ENCODE measurements at regions of chr7 and their contacts with region 1.

Region 1: GRCh38 chr7:19713676-19714075 is 4.8 kb upstream of the POLR1F start:
- DNase-seq: peak; percentile 6
- H3K4me3 ChIP-seq: no peak overlapping the region
- H3K27ac ChIP-seq: no peak overlapping the region
- H3K27me3 ChIP-seq: no peaks in the 10 kb centered on the region
- CTCF ChIP-seq: peak; percentile 66

Region 2: DNA sequence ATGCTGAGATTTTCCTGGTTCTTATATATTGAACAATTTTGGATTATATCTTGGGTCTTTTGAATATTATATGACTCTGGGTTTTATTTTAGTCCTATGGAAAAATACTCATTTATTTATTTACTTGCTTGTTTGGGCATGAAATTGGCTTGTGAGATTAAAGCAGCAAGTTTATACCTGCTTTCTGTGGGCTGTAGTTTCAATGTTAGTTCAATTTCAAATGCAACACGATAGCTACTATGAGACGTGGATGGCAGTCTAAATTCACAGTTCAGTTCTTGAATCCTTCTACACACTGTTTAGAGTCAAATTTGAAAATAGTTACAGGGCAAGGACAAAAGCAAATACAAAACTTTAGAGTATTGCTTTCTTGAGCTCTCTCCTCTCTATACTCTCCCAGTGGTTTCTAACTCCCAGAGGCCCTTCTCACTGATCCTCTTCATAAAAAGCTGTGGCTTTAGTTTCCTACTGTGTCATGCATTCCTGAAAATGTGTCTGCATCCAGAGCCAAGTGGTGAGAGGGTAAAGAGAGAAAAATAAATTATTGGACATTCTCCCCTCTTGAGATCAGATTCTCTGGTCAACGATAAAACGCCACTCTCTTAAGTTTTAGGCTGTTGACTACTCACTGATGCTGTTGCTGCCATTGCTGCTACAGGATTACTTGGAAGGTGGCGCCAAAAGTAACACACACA is 39.3 kb before region 1 on chr7:
- CTCF ChIA-PET with region 1: no interaction called
- POLR2A ChIA-PET with region 1: no interaction called
- DNase-seq: no peak
- H3K4me3 ChIP-seq: no peak overlapping the region
- H3K27ac ChIP-seq: no peak overlapping the region
- H3K27me3 ChIP-seq: no peaks in the 10 kb centered on the region
- CTCF ChIP-seq: no peak

Region 3: GRCh38 chr7:19698331-19698730 is 15.3 kb before region 1 on chr7:
- CTCF ChIA-PET with region 1: interaction called, 35 read pairs
- POLR2A ChIA-PET with region 1: interaction called, 3 read pairs
- DNase-seq: no peak
- H3K4me3 ChIP-seq: no peak overlapping the region
- H3K27ac ChIP-seq: no peak overlapping the region
- H3K27me3 ChIP-seq: no peaks in the 10 kb centered on the region
- CTCF ChIP-seq: no peak

Region 4: DNA sequence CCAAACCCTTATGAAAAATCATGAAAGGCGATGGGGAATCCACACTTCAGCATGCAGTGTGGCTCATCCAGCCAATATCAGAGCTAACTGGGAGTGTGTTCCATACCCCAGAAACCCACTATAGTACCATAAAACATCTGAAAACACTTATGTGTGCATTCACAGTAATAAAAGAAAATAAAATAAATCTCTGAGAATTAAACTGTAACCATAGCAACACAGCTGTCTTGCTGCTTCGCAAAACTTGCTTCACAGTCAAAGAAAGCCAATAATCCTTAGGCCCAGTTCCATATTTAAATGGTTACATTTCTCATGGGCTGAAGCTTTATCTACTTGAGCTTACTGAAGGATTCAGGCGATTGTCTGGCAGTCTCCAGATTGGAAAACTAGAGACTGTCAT is 15.0 kb after region 1 on chr7:
- CTCF ChIA-PET with region 1: interaction called, 26 read pairs
- POLR2A ChIA-PET with region 1: no interaction called
- DNase-seq: no peak
- H3K4me3 ChIP-seq: no peak overlapping the region
- H3K27ac ChIP-seq: no peak overlapping the region
- H3K27me3 ChIP-seq: no peaks in the 10 kb centered on the region
- CTCF ChIP-seq: no peak

Region 5: DNA sequence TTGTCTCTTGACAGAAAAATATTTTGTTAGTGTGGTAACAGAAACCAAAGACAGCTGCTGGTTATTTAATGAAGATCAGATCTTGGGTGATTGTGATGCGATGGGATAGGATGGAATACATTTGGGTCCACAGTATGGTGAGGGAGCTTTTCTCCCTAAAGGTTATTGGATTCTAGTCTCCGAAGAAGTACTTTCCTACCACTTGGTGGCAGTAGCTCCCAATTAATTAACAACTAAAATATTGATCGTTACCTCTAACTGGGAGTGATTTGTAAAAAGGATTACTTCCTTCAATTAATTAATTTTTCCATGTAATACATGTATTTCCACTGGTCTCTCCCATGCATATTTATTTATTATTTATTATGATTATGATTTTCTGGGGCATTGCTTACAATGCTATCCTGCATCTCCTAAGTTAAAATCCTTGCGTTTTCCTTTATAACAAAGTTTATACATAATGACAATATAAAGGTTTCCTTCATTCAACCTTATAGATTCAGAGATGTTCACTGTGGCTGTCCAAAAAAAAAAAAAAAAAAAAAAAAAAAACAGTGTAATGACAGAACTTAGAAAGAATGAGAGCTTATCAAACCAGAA is 34.2 kb after region 1 on chr7:
- CTCF ChIA-PET with region 1: interaction called, 26 read pairs
- POLR2A ChIA-PET with region 1: no interaction called
- DNase-seq: no peak
- H3K4me3 ChIP-seq: no peak overlapping the region
- H3K27ac ChIP-seq: no peak overlapping the region
- H3K27me3 ChIP-seq: no peaks in the 10 kb centered on the region
- CTCF ChIP-seq: peak; percentile 62

Region 6: GRCh38 chr7:19754521-19755116 is 40.9 kb after region 1 on chr7:
- CTCF ChIA-PET with region 1: interaction called, 13 read pairs
- POLR2A ChIA-PET with region 1: no interaction called
- DNase-seq: no peak
- H3K4me3 ChIP-seq: no peak overlapping the region
- H3K27ac ChIP-seq: no peak overlapping the region
- H3K27me3 ChIP-seq: no peaks in the 10 kb centered on the region
- CTCF ChIP-seq: peak; percentile 74

Region 7: DNA sequence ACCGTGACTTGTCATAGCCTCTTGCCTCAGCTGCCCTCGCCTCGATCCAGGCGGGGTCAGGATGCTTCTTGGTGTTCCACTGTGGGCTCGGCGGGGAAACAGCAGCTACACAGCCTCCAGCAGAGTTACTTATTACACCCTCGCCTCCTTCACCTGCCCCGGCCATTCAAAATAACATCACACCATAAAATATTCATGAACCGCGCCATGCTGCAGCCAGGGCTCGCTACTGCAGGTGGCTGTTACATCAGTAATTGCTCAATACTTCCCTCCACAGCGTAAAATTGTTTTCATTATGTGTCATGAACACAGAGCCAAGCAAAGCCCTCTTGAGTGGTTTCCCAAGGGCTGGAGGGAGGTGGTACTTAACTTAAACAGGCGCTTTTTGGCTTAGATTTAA is 1314.5 kb after region 1 on chr7:
- CTCF ChIA-PET with region 1: no interaction called
- POLR2A ChIA-PET with region 1: no interaction called
- DNase-seq: no peak
- H3K4me3 ChIP-seq: no peak overlapping the region
- H3K27ac ChIP-seq: no peak overlapping the region
- H3K27me3 ChIP-seq: no peaks in the 10 kb centered on the region
- CTCF ChIP-seq: no peak